Activated naive CD4-positive, alpha-beta T cell treated with anti-CD3 and anti-CD28 coated beads for 36 hours (primary cell): ENCODE measurements at regions of chr5 and their contacts with region 1.

Region 1: GRCh38 chr5:1641560-1642166 is 117.9 kb upstream of the LPCAT1 start:
- DNase-seq: peak; percentile 92
- H3K4me3 Mint-ChIP-seq: no peak overlapping the region
- H3K27ac Mint-ChIP-seq: no peak overlapping the region
- H3K4me1 Mint-ChIP-seq: peaks cover 17% of the 10 kb centered on the region
- H3K27me3 Mint-ChIP-seq: peaks cover 33% of the 10 kb centered on the region

Region 2: DNA sequence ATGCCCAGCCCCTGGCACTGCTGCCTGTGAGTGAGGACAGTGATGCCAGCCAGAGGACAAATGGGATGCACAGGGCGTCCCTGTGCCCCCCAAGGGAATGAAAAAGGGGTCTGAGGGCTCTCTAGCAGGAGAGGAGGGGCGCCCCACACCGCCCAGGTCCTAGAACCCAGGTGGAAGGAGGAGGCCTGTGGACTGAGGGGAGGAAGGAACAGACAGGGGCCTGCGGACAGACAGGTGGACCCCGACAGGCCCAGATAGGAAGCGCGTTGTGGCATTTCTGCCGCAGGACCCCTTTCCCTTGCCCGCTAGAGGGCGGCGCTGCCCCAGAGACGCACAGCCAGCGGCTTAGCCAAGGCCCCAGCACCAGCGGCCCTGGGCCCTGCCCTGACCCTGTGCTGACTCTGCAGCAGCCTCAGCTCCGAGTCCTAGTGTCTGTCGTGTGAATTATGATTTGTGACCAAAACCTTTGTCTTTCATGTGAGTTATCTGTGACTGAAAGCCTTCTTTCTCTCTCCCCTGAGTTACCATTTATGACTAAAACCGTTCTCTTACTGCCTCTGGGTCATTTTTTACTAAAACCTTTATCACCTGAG is 718.3 kb before region 1 on chr5:
- CTCF ChIA-PET with region 1: interaction called, 5 read pairs
- intact Hi-C with region 1: loop called (anchors 2 kb)
- DNase-seq: peak; percentile 77
- H3K4me3 Mint-ChIP-seq: no peak overlapping the region
- H3K27ac Mint-ChIP-seq: no peak overlapping the region
- H3K4me1 Mint-ChIP-seq: peaks cover 6% of the 10 kb centered on the region
- H3K27me3 Mint-ChIP-seq: peaks cover 29% of the 10 kb centered on the region

Region 3: GRCh38 chr5:1167728-1168709 is 473.6 kb before region 1 on chr5:
- CTCF ChIA-PET with region 1: interaction called, 13 read pairs
- intact Hi-C with region 1: loop called (anchors 1 kb)
- DNase-seq: peak; percentile 75
- H3K4me3 Mint-ChIP-seq: peak overlapping the region; percentile 37
- H3K27ac Mint-ChIP-seq: no peak overlapping the region
- H3K4me1 Mint-ChIP-seq: peaks cover 4% of the 10 kb centered on the region
- H3K27me3 Mint-ChIP-seq: peaks cover 8% of the 10 kb centered on the region

Region 4: DNA sequence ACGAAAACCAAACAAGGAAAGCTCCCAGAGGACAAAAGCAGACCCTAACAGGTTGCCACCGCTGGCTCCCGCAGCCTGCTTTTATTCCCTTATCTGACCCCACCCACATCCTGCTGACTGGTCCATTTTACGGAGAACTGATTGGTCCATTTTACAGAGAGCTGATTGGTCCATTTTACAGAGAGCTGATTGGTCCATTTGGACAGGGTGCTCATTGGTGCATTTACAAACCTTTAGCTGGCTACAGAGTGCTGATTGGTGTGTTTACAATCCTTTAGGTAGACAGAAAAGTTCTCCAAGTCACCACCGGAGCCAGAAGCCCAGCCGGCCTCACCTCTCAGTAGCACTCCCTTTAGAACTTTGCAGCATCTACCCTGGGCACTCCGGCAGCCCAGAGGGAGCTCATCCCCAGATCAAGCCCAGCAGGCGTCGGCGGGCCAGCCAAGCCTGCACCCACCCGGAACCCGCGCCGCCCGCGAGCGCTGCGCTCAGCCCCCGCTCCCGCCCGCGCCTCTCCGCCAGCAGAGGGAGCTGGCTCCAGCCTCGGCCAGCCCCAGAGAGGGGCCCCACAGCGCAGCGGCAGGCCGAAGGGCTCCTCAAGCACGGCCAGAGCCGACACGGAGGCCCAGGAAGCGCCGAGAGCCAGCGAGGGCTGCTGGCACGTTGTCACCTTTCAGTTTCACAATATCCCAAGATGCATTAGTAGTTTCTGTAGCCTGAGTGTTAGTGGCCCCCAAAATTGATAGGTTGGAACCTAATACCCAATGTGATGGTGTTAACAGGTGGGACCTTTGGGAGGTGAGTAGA is 261.4 kb before region 1 on chr5:
- CTCF ChIA-PET with region 1: interaction called, 8 read pairs
- intact Hi-C with region 1: loop called (anchors 1 kb)
- DNase-seq: peak; percentile 52
- H3K4me3 Mint-ChIP-seq: peak overlapping the region; percentile 60
- H3K27ac Mint-ChIP-seq: no peak overlapping the region
- H3K4me1 Mint-ChIP-seq: peaks cover 4% of the 10 kb centered on the region
- H3K27me3 Mint-ChIP-seq: no peaks in the 10 kb centered on the region

Region 5: GRCh38 chr5:1494780-1495524 is 146.7 kb before region 1 on chr5:
- CTCF ChIA-PET with region 1: interaction called, 5 read pairs
- intact Hi-C with region 1: loop called (anchors 5 kb)
- DNase-seq: peak; percentile 45
- H3K4me3 Mint-ChIP-seq: no peak overlapping the region
- H3K27ac Mint-ChIP-seq: no peak overlapping the region
- H3K4me1 Mint-ChIP-seq: peaks cover 35% of the 10 kb centered on the region
- H3K27me3 Mint-ChIP-seq: no peaks in the 10 kb centered on the region

Region 6: DNA sequence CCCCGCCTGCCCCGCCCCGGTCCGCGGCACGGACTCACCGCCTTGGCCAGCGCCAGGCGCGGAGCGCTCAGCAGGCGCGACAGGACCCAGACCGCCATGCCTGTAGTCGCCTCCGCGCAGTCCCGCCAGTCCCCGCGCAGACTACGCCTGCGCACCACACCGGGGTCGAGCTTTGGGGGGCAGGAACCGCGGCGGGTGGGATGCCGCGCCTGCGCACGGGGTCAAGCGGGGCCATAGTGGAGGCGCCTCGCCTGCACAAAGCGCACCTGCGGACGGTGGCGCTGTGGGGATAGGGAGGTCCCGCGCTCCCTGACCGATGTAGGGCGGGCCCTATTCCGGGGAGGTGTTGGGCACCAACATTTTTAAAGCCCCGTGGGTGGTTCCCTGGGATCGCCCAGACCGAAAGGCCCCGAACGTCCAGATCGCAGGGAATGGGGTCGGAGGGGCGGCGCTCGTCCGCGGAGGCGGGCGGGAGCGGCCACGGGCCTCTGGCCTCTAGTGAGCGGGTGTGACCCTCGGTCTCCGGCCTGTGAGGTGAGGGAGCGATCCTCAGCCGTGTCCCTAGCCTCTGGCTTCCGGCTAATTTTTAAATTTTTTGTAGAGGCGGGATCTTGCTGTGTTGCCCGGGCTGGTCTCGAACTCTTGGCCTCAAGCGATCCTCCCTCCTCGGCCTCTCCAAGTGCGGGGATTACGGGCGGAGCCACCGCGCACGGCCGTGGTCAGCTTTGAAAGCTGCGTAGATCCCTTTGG is 47.1 kb before region 1 on chr5:
- CTCF ChIA-PET with region 1: interaction called, 7 read pairs
- intact Hi-C with region 1: loop called (anchors 5 kb)
- DNase-seq: peak; percentile 80
- H3K4me3 Mint-ChIP-seq: peak overlapping the region; percentile 74
- H3K27ac Mint-ChIP-seq: no peak overlapping the region
- H3K4me1 Mint-ChIP-seq: peaks cover 19% of the 10 kb centered on the region
- H3K27me3 Mint-ChIP-seq: no peaks in the 10 kb centered on the region